Posterior cingulate gyrus (tissue), 11 donors: ENCODE measurements at regions of chr3 and their contacts with region 1.

Region 1: GRCh38 chr3:194691481-194692283 is 6.0 kb downstream of the FAM43A start:
- DNase-seq: no peak

Region 2: GRCh38 chr3:194757647-194758061 is 66.0 kb after region 1 on chr3:
- intact Hi-C with region 1: loop called (anchors 5 kb)
- DNase-seq: peak in 1 of 10 donors; percentile 85